Activated T-helper 2 cell treated with anti-CD3 and anti-CD28 coated beads, Interferon-gamma antibody, Interleukin-2, Interleukin-4, amounts not matched to agents 10 μg/mL and 5 μg/mL and 100 μg/mL, durations not matched to agents 14 hours and 24 hours and 36 hours (primary cell): ENCODE measurements at regions of chr1 and their contacts with region 1.

Region 1: DNA sequence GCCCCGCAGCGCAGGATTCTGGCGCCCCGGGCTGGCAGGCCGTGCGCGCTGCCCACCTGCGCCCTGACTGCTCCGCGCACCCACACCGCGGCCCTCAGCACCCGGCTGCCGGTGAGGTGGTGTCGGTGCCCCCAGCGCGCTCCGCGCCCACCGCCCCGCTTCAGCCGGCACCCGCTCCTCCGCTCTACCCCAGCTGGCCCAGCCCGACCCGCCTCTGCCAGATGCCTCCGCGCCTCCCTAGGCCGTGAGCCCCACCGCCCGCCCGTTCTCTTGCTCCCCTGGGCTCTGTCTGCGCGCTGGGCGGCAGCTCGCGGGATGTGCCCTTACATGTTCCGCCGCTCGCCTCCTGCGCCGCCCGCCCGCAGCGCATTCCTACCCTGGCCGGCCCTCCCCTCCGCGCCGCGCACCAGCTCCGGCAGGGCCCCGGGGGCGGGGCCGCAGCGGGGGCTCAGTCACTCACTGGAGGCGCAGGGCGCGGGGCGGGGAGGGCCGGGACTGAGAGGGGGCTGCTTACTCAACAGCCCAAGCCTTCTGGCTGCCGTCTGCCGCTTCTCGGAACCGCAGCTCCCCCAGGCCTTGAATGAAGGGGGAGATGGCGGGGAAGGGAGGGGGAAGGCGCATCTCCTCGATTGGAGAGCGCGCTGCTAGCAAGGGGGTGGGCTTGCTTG is at the start of gene PHLDA3:
- DNase-seq: peak; percentile 62
- H3K4me3 Mint-ChIP-seq: peak within 1 kb of the TSS; percentile 81
- H3K27ac Mint-ChIP-seq: no peak within 1 kb of the TSS
- H3K4me1 Mint-ChIP-seq: peaks cover 12% of the 10 kb centered on the region
- H3K27me3 Mint-ChIP-seq: peaks cover 26% of the 10 kb centered on the region
- total RNA-seq, gene PHLDA3: 8.8 and 9.2 TPM in 2 replicates

Region 2: DNA sequence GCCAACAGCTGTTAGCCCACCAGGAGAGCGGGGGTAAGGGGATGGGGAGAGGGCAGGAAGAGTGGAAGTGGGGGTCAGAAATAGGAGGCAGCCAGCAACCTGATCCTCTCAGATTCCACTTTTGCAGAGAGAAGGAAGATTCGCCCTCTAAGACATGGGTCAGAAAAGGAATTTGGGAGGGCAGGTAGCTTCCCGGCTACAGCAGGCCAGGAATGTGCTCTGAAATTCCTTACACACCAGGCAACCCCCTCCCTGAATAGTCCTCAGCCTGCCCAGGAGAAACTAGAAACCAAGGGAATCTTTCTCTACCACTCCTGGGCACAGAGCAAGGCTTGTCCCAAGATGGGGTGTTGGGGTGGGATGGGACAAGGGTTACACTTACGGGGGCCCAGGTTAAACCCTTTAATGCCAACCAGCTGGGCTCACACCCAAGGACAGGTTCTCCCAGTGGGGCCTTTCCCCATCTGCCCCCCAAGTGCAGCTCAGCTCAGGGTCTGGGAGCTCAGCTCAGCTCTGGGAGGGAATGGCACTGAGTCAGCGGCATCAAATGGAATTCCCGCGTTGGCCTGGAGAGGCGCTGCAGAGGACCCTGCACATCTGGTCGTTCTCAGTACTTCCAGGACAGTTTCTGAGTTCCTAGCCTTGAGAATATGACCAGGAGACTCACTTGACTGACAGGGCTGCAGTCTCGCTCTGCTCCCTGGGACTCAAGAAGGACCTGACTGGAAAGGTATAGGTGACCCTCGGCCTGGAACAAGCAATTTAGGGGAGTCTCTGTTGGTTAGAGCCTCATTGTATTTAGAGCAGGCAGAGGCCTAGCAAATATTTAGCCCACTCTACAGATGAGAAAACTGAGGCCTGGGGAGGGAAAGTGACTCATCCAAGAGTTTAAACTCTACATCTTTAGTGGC is 92.3 kb before region 1 on chr1:
- intact Hi-C with region 1: no loop called
- DNase-seq: no peak
- H3K4me3 Mint-ChIP-seq: no peak overlapping the region
- H3K27ac Mint-ChIP-seq: no peak overlapping the region
- H3K4me1 Mint-ChIP-seq: no peaks in the 10 kb centered on the region
- H3K27me3 Mint-ChIP-seq: peaks cover 5% of the 10 kb centered on the region

Region 3: DNA sequence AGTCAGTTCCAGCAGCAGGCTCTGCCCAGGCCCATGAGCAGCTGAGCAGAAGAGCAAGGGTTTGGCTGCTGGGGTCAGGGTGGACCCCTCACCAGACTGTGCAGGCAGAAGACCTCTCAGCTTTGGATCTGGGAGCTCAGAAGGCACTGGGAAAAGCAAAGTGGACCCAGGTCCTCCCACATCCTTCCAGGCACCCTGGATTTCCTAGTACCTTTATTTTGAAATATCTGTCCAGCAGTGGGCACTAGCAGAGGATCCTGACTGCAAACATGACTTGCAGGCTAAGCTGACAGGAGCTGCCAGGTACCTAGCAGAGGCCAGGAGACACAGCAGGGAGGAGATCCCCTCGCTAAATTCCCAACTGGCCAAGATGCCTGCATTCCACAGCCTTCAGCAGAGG is 13.3 kb before region 1 on chr1:
- intact Hi-C with region 1: loop called (anchors 2 kb)
- DNase-seq: no peak
- H3K4me3 Mint-ChIP-seq: no peak overlapping the region
- H3K27ac Mint-ChIP-seq: no peak overlapping the region
- H3K4me1 Mint-ChIP-seq: peaks cover 26% of the 10 kb centered on the region
- H3K27me3 Mint-ChIP-seq: peaks cover 18% of the 10 kb centered on the region

Region 4: GRCh38 chr1:202553560-202554038 is 1084.6 kb after region 1 on chr1:
- intact Hi-C with region 1: no loop called
- DNase-seq: no peak
- H3K4me3 Mint-ChIP-seq: no peak overlapping the region
- H3K27ac Mint-ChIP-seq: no peak overlapping the region
- H3K4me1 Mint-ChIP-seq: peaks cover 9% of the 10 kb centered on the region
- H3K27me3 Mint-ChIP-seq: no peaks in the 10 kb centered on the region